SK-N-SH (cell line): ENCODE measurements at regions of chr1 and their contacts with region 1.

Region 1: GRCh38 chr1:180178511-180179161 is 24.0 kb downstream of the QSOX1 start:
- DNase-seq: peak; percentile 85
- H3K4me3 ChIP-seq: peak overlapping the region in 1 of 2 experiments; percentile 27; a peak in 1 of 4 replicates
- H3K27ac ChIP-seq: no peak overlapping the region
- H3K4me1 ChIP-seq: peaks cover 0 to 12% of the 10 kb centered on the region in 2 experiments; a peak in 1 of 4 replicates
- H3K27me3 ChIP-seq: no peaks in the 10 kb centered on the region
- CTCF ChIP-seq: peak; percentile 97
- EP300 ChIP-seq: no peak
- RAD21 ChIP-seq: peak; percentile 96

Region 2: GRCh38 chr1:179867807-179868330 is 310.8 kb before region 1 on chr1:
- CTCF ChIA-PET with region 1: interaction called, 46 read pairs
- POLR2A ChIA-PET with region 1: no interaction called
- DNase-seq: peak; percentile 63
- H3K4me3 ChIP-seq: no peak overlapping the region
- H3K27ac ChIP-seq: no peak overlapping the region
- H3K4me1 ChIP-seq: peaks cover 0 to 4% of the 10 kb centered on the region in 2 experiments; a peak in 3 of 4 replicates
- H3K27me3 ChIP-seq: no peaks in the 10 kb centered on the region
- CTCF ChIP-seq: peak; percentile 82
- EP300 ChIP-seq: no peak
- RAD21 ChIP-seq: peak; percentile 65

Region 3: GRCh38 chr1:179938752-179939151 is 239.9 kb before region 1 on chr1:
- CTCF ChIA-PET with region 1: no interaction called
- POLR2A ChIA-PET with region 1: no interaction called
- DNase-seq: no peak
- H3K4me3 ChIP-seq: no peak overlapping the region
- H3K27ac ChIP-seq: no peak overlapping the region
- H3K4me1 ChIP-seq: peaks cover 0 to 6% of the 10 kb centered on the region in 2 experiments; a peak in 2 of 4 replicates
- H3K27me3 ChIP-seq: no peaks in the 10 kb centered on the region
- CTCF ChIP-seq: no peak
- EP300 ChIP-seq: no peak
- RAD21 ChIP-seq: no peak

Region 4: DNA sequence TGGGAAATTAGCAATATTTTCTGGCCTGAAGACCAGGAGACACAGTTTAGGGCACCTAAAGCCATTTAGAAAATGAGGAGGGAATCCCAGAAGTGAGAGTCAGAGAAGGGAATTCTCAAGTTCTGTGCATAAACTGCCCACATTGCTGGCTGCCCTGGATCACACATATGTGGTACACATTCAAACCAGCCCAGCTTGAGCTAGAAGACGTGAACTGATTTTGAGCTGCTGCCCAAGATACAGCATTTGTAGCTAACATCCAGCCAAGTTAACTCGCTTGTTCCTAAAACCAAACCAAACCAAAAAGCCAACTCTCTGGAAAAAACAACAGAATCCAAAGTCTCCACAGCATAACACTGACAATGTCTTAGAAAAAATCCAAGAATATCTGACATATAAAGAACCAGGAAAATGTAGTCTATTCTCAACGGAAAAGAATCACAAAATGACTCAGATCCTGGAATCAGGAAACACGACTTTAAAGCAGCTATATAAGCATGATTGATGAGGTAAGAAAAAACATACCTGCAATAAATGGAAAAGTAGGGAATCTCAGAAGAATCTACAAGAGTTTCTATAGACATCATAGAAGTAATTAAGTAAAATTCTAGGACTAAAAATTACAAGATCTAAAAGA is 42.2 kb before region 1 on chr1:
- CTCF ChIA-PET with region 1: no interaction called
- POLR2A ChIA-PET with region 1: no interaction called
- DNase-seq: no peak
- H3K4me3 ChIP-seq: no peak overlapping the region
- H3K27ac ChIP-seq: no peak overlapping the region
- H3K4me1 ChIP-seq: no peaks in the 10 kb centered on the region
- H3K27me3 ChIP-seq: no peaks in the 10 kb centered on the region
- CTCF ChIP-seq: no peak
- EP300 ChIP-seq: no peak
- RAD21 ChIP-seq: no peak

Region 5: GRCh38 chr1:180157108-180157507 is 21.5 kb before region 1 on chr1:
- CTCF ChIA-PET with region 1: interaction called, 11 read pairs
- POLR2A ChIA-PET with region 1: no interaction called
- DNase-seq: no peak
- H3K4me3 ChIP-seq: peak overlapping the region in 1 of 2 experiments; percentile 82; a peak in 2 of 4 replicates
- H3K27ac ChIP-seq: peak overlapping the region in 1 of 2 experiments; percentile 72; a peak in 2 of 4 replicates
- H3K4me1 ChIP-seq: peaks cover 10 to 24% of the 10 kb centered on the region in 2 experiments
- H3K27me3 ChIP-seq: no peaks in the 10 kb centered on the region
- CTCF ChIP-seq: no peak
- EP300 ChIP-seq: no peak
- RAD21 ChIP-seq: no peak

Region 6: DNA sequence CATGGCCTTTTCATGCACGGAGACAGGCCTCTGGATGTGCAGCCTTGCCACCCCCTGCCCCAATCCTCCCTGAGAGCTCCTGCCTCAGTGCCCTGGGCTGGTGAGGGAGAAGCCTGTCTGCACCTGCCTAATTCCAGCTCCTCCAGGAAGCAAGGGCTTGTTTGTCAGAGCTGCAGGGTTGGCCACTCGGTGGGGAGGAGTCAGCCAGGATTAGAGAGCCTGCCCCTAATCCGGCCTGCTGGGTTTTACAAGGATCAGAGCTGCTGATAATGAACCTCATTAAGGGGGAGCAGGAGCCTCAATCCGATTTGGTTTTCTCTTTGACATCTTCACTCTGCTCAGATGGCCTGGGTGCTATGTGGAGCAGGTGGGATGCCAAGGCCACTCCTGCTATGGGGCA is 19.6 kb after region 1 on chr1:
- CTCF ChIA-PET with region 1: interaction called, 15 read pairs
- POLR2A ChIA-PET with region 1: no interaction called
- DNase-seq: no peak
- H3K4me3 ChIP-seq: no peak overlapping the region
- H3K27ac ChIP-seq: no peak overlapping the region
- H3K4me1 ChIP-seq: no peaks in the 10 kb centered on the region; a peak in 1 of 4 replicates
- H3K27me3 ChIP-seq: no peaks in the 10 kb centered on the region
- CTCF ChIP-seq: no peak
- EP300 ChIP-seq: no peak
- RAD21 ChIP-seq: no peak